CD8-positive, alpha-beta memory T cell (primary cell): ENCODE measurements at regions of chr6 and their contacts with region 1.

Region 1: GRCh38 chr6:26196846-26197648 is 109.8 kb downstream of the HFE start:
- DNase-seq: peak; percentile 66 to 93 (median 90)
- H3K4me3 ChIP-seq: peak overlapping the region; percentile 84
- H3K4me3 Mint-ChIP-seq: peak overlapping the region; percentile 95 to 99 (median 96)
- H3K27ac ChIP-seq: peak overlapping the region; percentile 95
- H3K27ac Mint-ChIP-seq: peak overlapping the region; percentile 95 to 100 (median 98)
- H3K4me1 ChIP-seq: peaks cover 17% of the 10 kb centered on the region
- H3K4me1 Mint-ChIP-seq: peaks cover 33 to 63% (median 59%) of the 10 kb centered on the region in 3 donors
- H3K27me3 ChIP-seq: no peaks in the 10 kb centered on the region
- H3K27me3 Mint-ChIP-seq: peaks cover 0 to 4% of the 10 kb centered on the region in 2 donors

Region 2: GRCh38 chr6:26054857-26055669 is 142.0 kb before region 1 on chr6:
- CTCF ChIA-PET with region 1: interaction called, 4 read pairs
- POLR2A ChIA-PET with region 1: interaction called, 16 read pairs
- DNase-seq: peak; percentile 74 to 89 (median 86)
- H3K4me3 ChIP-seq: peak overlapping the region; percentile 92
- H3K4me3 Mint-ChIP-seq: peak overlapping the region; percentile 90 to 97 (median 94)
- H3K27ac ChIP-seq: peak overlapping the region; percentile 96
- H3K27ac Mint-ChIP-seq: peak overlapping the region; percentile 90 to 99 (median 97)
- H3K4me1 ChIP-seq: peaks cover 9% of the 10 kb centered on the region
- H3K4me1 Mint-ChIP-seq: peaks cover 17 to 30% (median 26%) of the 10 kb centered on the region in 3 donors
- H3K27me3 ChIP-seq: no peaks in the 10 kb centered on the region
- H3K27me3 Mint-ChIP-seq: peaks cover 0 to 4% of the 10 kb centered on the region in 2 donors

Region 3: DNA sequence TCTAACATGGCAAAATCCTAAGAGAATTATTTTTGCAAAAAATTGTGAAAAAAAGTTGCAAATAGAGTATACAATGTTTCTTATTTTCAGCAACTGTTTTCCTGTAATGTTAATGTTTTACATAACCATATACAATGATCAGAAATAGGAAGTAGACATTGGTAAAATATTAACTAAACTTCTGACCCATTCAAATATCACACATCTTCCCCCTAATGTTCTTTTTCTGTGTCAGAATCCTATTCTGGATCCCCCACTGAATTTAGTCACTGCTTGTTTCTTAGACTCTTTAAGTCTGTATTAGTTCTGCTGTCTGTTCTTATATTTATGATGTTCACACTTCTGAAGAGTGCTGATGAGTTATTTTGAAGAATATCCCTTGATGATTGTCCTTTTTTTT is 47.8 kb before region 1 on chr6:
- CTCF ChIA-PET with region 1: no interaction called
- POLR2A ChIA-PET with region 1: no interaction called
- DNase-seq: no peak
- H3K4me3 ChIP-seq: no peak overlapping the region
- H3K4me3 Mint-ChIP-seq: no peak overlapping the region
- H3K27ac ChIP-seq: no peak overlapping the region
- H3K27ac Mint-ChIP-seq: no peak overlapping the region
- H3K4me1 ChIP-seq: no peaks in the 10 kb centered on the region
- H3K4me1 Mint-ChIP-seq: no peaks in the 10 kb centered on the region
- H3K27me3 ChIP-seq: no peaks in the 10 kb centered on the region
- H3K27me3 Mint-ChIP-seq: no peaks in the 10 kb centered on the region

Region 4: DNA sequence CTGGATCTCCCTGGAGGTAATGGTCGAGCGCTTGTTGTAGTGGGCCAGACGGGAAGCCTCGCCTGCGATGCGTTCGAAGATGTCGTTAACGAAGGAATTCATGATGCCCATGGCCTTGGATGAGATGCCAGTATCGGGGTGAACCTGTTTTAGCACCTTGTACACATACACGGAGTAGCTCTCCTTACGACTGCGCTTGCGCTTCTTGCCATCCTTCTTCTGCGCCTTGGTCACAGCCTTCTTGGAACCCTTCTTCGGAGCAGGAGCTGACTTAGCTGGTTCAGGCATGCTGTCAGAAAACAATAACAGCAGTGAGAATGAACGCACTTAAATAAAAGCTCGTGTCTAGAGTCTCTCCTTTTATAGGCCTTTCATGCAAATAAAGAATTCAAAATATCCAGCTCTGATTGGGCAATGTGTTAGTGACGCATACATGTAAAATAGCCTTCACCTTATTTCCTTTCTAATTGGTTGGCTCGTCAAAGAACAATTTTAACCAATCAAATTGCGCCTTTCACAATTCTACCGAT is 19.4 kb after region 1 on chr6:
- CTCF ChIA-PET with region 1: interaction called, 114 read pairs
- POLR2A ChIA-PET with region 1: interaction called, 391 read pairs
- DNase-seq: peak; percentile 43 to 93 (median 91)
- H3K4me3 ChIP-seq: peak overlapping the region; percentile 91
- H3K4me3 Mint-ChIP-seq: no peak overlapping the region
- H3K27ac ChIP-seq: peak overlapping the region; percentile 94
- H3K27ac Mint-ChIP-seq: no peak overlapping the region
- H3K4me1 ChIP-seq: peaks cover 23% of the 10 kb centered on the region
- H3K4me1 Mint-ChIP-seq: peaks cover 2 to 8% (median 5%) of the 10 kb centered on the region in 3 donors
- H3K27me3 ChIP-seq: no peaks in the 10 kb centered on the region
- H3K27me3 Mint-ChIP-seq: no peaks in the 10 kb centered on the region

Region 5: DNA sequence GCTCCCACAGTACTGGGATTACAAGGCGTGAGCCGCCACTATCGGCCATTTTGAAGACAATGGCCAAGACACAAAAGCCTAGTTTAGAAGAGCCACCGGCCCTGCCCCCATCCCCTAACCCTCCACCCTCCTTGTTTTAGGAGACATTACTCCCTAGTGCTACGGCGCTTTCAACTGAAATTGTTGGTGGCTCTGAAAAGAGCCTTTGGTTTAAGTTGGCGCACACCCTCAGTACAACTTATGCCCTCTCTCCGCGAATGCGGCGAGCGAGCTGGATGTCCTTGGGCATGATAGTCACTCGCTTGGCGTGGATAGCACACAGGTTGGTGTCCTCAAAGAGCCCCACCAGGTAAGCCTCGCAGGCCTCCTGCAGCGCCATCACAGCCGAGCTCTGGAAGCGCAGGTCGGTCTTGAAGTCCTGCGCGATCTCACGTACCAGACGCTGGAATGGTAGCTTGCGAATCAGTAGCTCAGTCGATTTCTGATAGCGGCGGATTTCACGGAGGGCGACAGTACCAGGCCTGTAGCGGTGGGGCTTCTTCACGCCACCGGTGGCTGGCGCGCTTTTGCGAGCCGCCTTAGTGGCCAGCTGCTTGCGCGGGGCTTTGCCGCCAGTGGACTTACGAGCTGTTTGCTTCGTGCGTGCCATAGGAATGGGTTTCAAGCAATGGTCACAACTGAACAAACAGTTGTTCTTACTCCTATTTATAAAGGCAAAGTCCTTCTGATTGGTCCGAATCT is 53.1 kb after region 1 on chr6:
- CTCF ChIA-PET with region 1: interaction called, 3 read pairs
- POLR2A ChIA-PET with region 1: interaction called, 104 read pairs
- DNase-seq: peak; percentile 58 to 89 (median 77)
- H3K4me3 ChIP-seq: peak overlapping the region; percentile 94
- H3K4me3 Mint-ChIP-seq: peak overlapping the region; percentile 95 to 99 (median 97)
- H3K27ac ChIP-seq: peak overlapping the region; percentile 74
- H3K27ac Mint-ChIP-seq: peak overlapping the region; percentile 56 to 96 (median 93)
- H3K4me1 ChIP-seq: peaks cover 10% of the 10 kb centered on the region
- H3K4me1 Mint-ChIP-seq: peaks cover 36 to 58% (median 48%) of the 10 kb centered on the region in 3 donors
- H3K27me3 ChIP-seq: no peaks in the 10 kb centered on the region
- H3K27me3 Mint-ChIP-seq: no peaks in the 10 kb centered on the region

Region 6: GRCh38 chr6:26322645-26323482 is 125.8 kb after region 1 on chr6:
- CTCF ChIA-PET with region 1: no interaction called
- POLR2A ChIA-PET with region 1: no interaction called
- DNase-seq: peak in 4 of 5 donors; percentile 38 to 79 (median 70)
- H3K4me3 ChIP-seq: peak overlapping the region; percentile 62
- H3K4me3 Mint-ChIP-seq: peak overlapping the region; percentile 72 to 93 (median 87)
- H3K27ac ChIP-seq: peak overlapping the region; percentile 69
- H3K27ac Mint-ChIP-seq: peak overlapping the region; percentile 80 to 94 (median 85)
- H3K4me1 ChIP-seq: no peaks in the 10 kb centered on the region
- H3K4me1 Mint-ChIP-seq: peaks cover 24 to 37% (median 28%) of the 10 kb centered on the region in 3 donors
- H3K27me3 ChIP-seq: no peaks in the 10 kb centered on the region
- H3K27me3 Mint-ChIP-seq: peaks cover 5 to 19% of the 10 kb centered on the region in 2 donors

Region 7: GRCh38 chr6:27132532-27133280 is 935.7 kb after region 1 on chr6:
- CTCF ChIA-PET with region 1: interaction called, 4 read pairs
- POLR2A ChIA-PET with region 1: interaction called, 31 read pairs
- DNase-seq: peak; percentile 77 to 98 (median 96)
- H3K4me3 ChIP-seq: peak overlapping the region; percentile 75
- H3K4me3 Mint-ChIP-seq: no peak overlapping the region
- H3K27ac ChIP-seq: peak overlapping the region; percentile 89
- H3K27ac Mint-ChIP-seq: no peak overlapping the region
- H3K4me1 ChIP-seq: peaks cover 20% of the 10 kb centered on the region
- H3K4me1 Mint-ChIP-seq: peaks cover 7 to 21% (median 16%) of the 10 kb centered on the region in 3 donors
- H3K27me3 ChIP-seq: no peaks in the 10 kb centered on the region
- H3K27me3 Mint-ChIP-seq: peaks cover 0 to 2% of the 10 kb centered on the region in 2 donors